ENCODE measurements at regions of chr7 and their contacts with region 1.

Region 1: DNA sequence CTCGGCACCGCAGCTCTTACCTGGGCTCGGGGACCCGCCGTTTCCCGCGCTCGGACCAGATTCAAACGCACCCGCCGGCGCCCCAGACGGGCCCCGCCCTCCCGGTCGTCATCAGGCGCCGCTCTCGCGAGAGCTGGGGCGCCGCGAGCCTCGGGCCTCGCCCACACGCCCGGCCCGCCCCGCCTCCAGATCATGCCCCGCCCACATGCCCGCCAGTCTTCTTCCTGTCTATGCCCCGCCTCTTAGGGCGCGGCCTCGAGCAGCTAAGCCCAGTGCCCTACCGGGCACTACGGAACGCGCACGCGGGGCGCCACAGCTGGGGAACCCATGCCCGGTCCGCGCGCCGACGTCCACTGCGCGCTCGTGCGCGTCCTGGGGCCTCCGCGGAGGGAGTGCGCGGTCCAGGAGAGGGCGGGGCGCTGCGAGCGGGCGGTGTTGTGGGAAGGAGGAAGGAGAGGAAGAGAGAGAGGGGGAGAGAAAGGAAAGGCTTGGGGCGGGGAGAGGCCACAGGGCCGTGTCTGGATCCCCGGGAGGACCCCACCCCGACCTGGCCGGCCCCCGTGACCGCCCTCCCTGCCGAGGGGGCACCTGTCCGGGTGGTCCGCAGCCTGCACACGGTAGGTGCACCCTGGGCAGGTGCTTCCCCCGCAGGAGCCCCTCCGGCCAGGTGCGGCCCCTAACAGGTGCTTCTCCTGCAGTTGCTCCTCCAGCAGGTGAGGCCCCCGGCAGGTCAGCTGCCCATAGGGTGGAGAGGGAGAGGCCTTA is at the start of gene NCAPG2:
- DNase-seq: peak; percentile 94
- H3K4me3 Mint-ChIP-seq: peak within 1 kb of the TSS; percentile 82
- H3K27ac Mint-ChIP-seq: peak within 1 kb of the TSS; percentile 87
- H3K4me1 Mint-ChIP-seq: peaks cover 43% of the 10 kb centered on the region
- H3K27me3 Mint-ChIP-seq: no peaks in the 10 kb centered on the region
- total RNA-seq, gene NCAPG2: 94.7 and 101 TPM in 2 replicates

Region 2: GRCh38 chr7:158655931-158656441 is 48.9 kb before region 1 on chr7:
- intact Hi-C with region 1: loop called (anchors 2 kb)
- DNase-seq: peak; percentile 66
- H3K4me3 Mint-ChIP-seq: no peak overlapping the region
- H3K27ac Mint-ChIP-seq: peak overlapping the region; percentile 88
- H3K4me1 Mint-ChIP-seq: peaks cover 31% of the 10 kb centered on the region
- H3K27me3 Mint-ChIP-seq: no peaks in the 10 kb centered on the region

Region 3: GRCh38 chr7:158856883-158857668 is 152.2 kb after region 1 on chr7:
- intact Hi-C with region 1: loop called (anchors 10 kb)
- DNase-seq: no peak
- H3K4me3 Mint-ChIP-seq: peak overlapping the region; percentile 99
- H3K27ac Mint-ChIP-seq: no peak overlapping the region
- H3K4me1 Mint-ChIP-seq: peaks cover 23% of the 10 kb centered on the region
- H3K27me3 Mint-ChIP-seq: no peaks in the 10 kb centered on the region